Panc1 (cell line): ENCODE measurements at regions of chr1 and their contacts with region 1.

Region 1: GRCh38 chr1:50959913-50960844 is at the start of gene FAF1:
- DNase-seq: peak; percentile 94
- ATAC-seq: peak; percentile 94
- H3K4me3 ChIP-seq: peak within 1 kb of the TSS; percentile 95 to 97
- H3K27ac ChIP-seq: peak within 1 kb of the TSS; percentile 96
- H3K4me1 ChIP-seq: peaks cover 8% of the 10 kb centered on the region; the same call in 1 of the 2 replicates
- H3K27me3 ChIP-seq: no peaks in the 10 kb centered on the region
- CTCF ChIP-seq: no peak
- total RNA-seq, gene FAF1: 101 TPM

Region 2: DNA sequence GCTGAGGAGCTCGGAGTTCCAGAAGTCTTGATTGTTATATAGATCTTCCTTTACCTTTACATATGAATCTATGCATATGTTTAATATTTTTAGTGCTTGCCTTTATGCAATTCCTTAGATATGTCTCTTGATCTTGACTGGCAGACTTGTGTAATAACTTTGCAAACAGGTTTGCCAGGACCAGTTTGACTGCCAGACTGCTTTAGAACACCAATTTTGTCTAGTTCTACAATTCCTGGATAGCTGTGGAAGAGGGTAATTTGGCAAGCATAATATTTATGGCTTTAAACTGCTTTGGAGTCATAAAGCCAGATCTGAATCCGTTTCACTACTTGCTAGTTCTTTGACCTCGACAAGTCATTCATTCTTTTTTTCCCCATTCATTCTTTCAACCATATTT is 250.1 kb before region 1 on chr1:
- CTCF ChIA-PET with region 1: no interaction called
- POLR2A ChIA-PET with region 1: no interaction called
- in situ Hi-C with region 1: no loop called
- intact Hi-C with region 1: no loop called
- DNase-seq: no peak
- ATAC-seq: no peak
- H3K4me3 ChIP-seq: no peak overlapping the region
- H3K27ac ChIP-seq: no peak overlapping the region
- H3K4me1 ChIP-seq: peaks cover 5% of the 10 kb centered on the region
- H3K27me3 ChIP-seq: no peaks in the 10 kb centered on the region
- CTCF ChIP-seq: no peak

Region 3: DNA sequence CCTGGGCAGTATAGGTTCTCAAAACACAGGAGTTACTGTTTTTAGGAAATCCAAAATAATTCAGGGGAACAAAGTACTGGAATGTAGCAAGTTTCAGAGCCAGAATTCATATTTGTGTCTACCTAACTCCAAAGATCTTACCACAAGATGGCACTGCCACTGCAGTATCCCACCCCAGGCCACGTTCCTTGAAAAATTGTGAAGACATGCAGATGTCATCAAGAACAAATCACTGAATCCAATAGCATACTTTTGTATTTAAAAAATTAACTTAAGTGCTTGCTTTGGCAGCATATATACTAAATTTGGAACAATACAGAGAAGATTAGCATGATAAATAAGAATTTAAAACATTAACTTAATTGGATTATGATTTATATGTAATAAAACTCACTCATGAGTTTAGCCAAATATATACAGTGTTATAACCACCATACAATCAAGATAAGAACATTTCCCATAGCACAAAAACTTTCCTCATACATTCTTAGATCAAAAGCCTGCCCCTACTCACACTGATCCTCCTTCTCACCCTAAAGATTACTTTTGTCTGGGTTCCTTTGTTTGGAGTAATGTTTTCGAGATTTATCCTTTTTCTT is 210.1 kb before region 1 on chr1:
- CTCF ChIA-PET with region 1: interaction called, 10 read pairs
- POLR2A ChIA-PET with region 1: no interaction called
- in situ Hi-C with region 1: no loop called
- intact Hi-C with region 1: no loop called
- DNase-seq: no peak
- ATAC-seq: peak; percentile 75; the same call in 1 of the 2 replicates
- H3K4me3 ChIP-seq: no peak overlapping the region
- H3K27ac ChIP-seq: no peak overlapping the region
- H3K4me1 ChIP-seq: no peaks in the 10 kb centered on the region
- H3K27me3 ChIP-seq: no peaks in the 10 kb centered on the region
- CTCF ChIP-seq: peak; percentile 66; the same call in 1 of the 2 replicates

Region 4: DNA sequence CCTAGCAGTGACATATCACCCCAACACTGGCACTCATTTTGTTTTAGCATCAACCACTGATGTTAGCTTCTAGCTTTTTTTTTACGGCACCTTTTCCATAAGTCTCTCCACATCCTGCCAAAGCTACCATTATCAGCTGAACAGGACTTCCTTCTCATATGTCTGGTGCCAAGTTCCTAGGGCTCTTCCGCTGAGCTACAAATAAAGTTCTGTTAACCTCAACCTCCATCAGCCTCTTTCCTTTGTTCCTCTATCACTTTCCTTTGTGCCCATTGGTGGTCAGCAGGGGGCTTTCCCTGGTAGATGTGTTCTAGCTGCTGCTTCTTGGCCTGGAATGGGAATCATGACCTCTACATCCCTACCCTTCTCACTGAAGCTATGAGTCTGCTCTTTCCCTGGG is 163.9 kb before region 1 on chr1:
- CTCF ChIA-PET with region 1: no interaction called
- POLR2A ChIA-PET with region 1: no interaction called
- in situ Hi-C with region 1: no loop called
- intact Hi-C with region 1: no loop called
- DNase-seq: no peak
- ATAC-seq: no peak
- H3K4me3 ChIP-seq: no peak overlapping the region
- H3K27ac ChIP-seq: no peak overlapping the region
- H3K4me1 ChIP-seq: no peaks in the 10 kb centered on the region
- H3K27me3 ChIP-seq: no peaks in the 10 kb centered on the region
- CTCF ChIP-seq: no peak

Region 5: GRCh38 chr1:50978144-50978851 is 18.1 kb after region 1 on chr1:
- CTCF ChIA-PET with region 1: interaction called, 12 read pairs
- POLR2A ChIA-PET with region 1: interaction called, 9 read pairs
- in situ Hi-C with region 1: no loop called
- intact Hi-C with region 1: no loop called
- DNase-seq: no peak
- ATAC-seq: peak; percentile 81
- H3K4me3 ChIP-seq: peak overlapping the region; percentile 80 to 83
- H3K27ac ChIP-seq: peak overlapping the region; percentile 100
- H3K4me1 ChIP-seq: peaks cover 52% of the 10 kb centered on the region
- H3K27me3 ChIP-seq: no peaks in the 10 kb centered on the region
- CTCF ChIP-seq: no peak

Region 6: DNA sequence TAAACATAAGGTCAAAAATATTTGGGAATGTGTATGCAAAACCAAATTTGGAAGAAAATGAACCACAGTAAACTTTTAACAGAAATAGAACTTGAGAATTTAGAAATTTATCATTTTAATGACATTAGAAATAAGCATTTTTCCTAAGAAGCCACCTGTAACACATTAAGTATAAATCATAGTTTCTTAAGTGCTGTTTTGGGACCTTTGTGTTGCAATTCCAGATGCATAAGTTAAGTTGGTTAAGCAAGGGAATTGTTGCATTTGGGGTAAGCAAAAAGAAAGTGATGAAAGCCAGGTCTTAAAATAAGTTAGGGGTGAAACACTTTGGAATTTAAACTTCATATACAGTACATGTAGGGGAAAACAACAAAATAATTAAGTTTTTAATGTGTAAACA is 59.6 kb after region 1 on chr1:
- CTCF ChIA-PET with region 1: no interaction called
- POLR2A ChIA-PET with region 1: no interaction called
- in situ Hi-C with region 1: no loop called
- intact Hi-C with region 1: no loop called
- DNase-seq: no peak
- ATAC-seq: no peak
- H3K4me3 ChIP-seq: no peak overlapping the region
- H3K27ac ChIP-seq: no peak overlapping the region
- H3K4me1 ChIP-seq: no peaks in the 10 kb centered on the region
- H3K27me3 ChIP-seq: no peaks in the 10 kb centered on the region
- CTCF ChIP-seq: no peak